A549 (cell line): ENCODE measurements at regions of chr17 and their contacts with region 1.

Region 1: GRCh38 chr17:8753976-8754440 is 4.3 kb downstream of the SPDYE4 start:
- DNase-seq: peak; percentile 64 to 65
- ATAC-seq: peak; percentile 84 to 89
- H3K4me3 ChIP-seq: no peak overlapping the region
- H3K27ac ChIP-seq: no peak overlapping the region
- H3K4me1 ChIP-seq: no peaks in the 10 kb centered on the region
- CTCF ChIP-seq: peak; percentile 66
- EP300 ChIP-seq: no peak
- POLR2A ChIP-seq: no peak
- RAD21 ChIP-seq: peak; percentile 41 to 53; a peak in 4 of 5 replicates

Region 2: GRCh38 chr17:8606401-8606800 is 147.6 kb before region 1 on chr17:
- CTCF ChIA-PET with region 1: no interaction called
- POLR2A ChIA-PET with region 1: no interaction called
- DNase-seq: no peak
- ATAC-seq: no peak
- H3K4me3 ChIP-seq: no peak overlapping the region
- H3K27ac ChIP-seq: no peak overlapping the region
- H3K4me1 ChIP-seq: no peaks in the 10 kb centered on the region
- CTCF ChIP-seq: no peak
- EP300 ChIP-seq: no peak
- POLR2A ChIP-seq: no peak
- RAD21 ChIP-seq: no peak

Region 3: GRCh38 chr17:8766731-8767130 is 12.7 kb after region 1 on chr17:
- CTCF ChIA-PET with region 1: interaction called, 10 read pairs
- POLR2A ChIA-PET with region 1: no interaction called
- DNase-seq: no peak
- ATAC-seq: no peak
- H3K4me3 ChIP-seq: no peak overlapping the region
- H3K27ac ChIP-seq: no peak overlapping the region
- H3K4me1 ChIP-seq: no peaks in the 10 kb centered on the region
- CTCF ChIP-seq: no peak
- EP300 ChIP-seq: no peak
- POLR2A ChIP-seq: no peak
- RAD21 ChIP-seq: no peak